Panc1 (cell line): ENCODE measurements at regions of chr7 and their contacts with region 1.

Region 1: DNA sequence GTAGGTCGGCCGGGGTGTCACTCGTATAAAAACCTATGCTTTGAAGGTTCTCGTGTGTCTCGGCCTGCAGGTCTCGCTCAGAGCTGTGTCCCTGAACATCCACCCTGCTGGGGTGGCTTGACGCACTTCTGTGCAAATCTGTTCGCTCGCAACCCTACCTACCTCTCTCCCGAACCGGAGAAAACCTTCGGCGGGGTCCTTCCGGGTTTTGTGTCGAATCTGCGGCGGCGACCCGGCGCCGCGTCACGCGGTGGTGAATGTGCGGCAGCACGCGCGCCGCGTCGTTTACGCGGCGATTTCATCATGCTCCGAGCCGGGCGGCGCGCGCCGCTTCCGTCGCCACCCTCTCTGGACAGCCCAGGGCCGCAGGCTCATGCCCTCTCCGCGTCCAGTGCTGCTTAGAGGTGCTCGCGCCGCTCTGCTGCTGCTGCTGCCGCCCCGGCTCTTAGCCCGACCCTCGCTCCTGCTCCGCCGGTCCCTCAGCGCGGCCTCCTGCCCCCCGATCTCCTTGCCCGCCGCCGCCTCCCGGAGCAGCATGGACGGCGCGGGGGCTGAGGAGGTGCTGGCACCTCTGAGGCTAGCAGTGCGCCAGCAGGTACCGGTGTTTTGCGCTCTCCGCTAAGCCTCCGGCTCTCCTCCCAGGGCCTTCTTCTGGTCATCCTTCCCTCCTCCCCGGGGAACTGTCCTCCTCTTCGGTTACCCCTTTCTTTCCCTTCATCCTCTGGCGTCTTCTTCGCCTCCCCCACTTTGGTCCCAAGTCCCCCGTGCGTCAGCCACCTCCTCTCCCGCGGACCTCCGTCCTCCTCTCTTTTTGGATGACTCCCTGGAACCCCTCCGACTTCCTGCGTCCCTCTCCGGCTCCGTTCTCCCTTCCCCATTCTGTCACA is at the start of gene GARS1:
- DNase-seq: peak; percentile 69
- ATAC-seq: peak; percentile 98
- H3K4me3 ChIP-seq: peak within 1 kb of the TSS; percentile 72 to 100
- H3K27ac ChIP-seq: peak within 1 kb of the TSS; percentile 99
- H3K4me1 ChIP-seq: peaks cover 19% of the 10 kb centered on the region
- H3K27me3 ChIP-seq: no peaks in the 10 kb centered on the region
- CTCF ChIP-seq: no peak
- total RNA-seq, gene GARS1: 271 TPM

Region 2: GRCh38 chr7:30225863-30226613 is 368.8 kb before region 1 on chr7:
- CTCF ChIA-PET with region 1: no interaction called
- POLR2A ChIA-PET with region 1: interaction called, 12 read pairs
- in situ Hi-C with region 1: no loop called
- intact Hi-C with region 1: no loop called
- DNase-seq: no peak
- ATAC-seq: peak; percentile 28; the same call in 1 of the 2 replicates
- H3K4me3 ChIP-seq: no peak overlapping the region
- H3K27ac ChIP-seq: no peak overlapping the region
- H3K4me1 ChIP-seq: 0 out of 2 replicates have a peak, but pooled peaks cover 3% of the 10 kb centered on the region
- H3K27me3 ChIP-seq: peaks cover 5% of the 10 kb centered on the region
- CTCF ChIP-seq: no peak

Region 3: DNA sequence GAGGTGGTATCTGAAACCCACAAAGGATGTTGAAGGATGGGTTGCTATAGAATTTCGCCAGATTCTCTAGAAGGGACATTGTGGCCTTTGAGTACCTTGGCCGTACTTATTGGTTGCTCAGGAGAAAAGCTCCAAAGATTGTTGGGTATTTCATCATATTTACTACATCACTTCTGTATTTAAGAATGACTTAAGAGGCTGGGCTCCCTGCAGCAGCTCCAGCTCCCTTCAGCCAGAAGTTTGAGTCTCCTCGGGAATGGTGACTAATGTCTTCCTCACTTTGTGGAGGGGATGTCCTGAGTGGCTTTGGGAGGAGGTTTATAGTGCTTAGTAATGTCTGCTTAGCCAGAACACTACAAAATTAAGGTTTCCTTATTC is 194.5 kb after region 1 on chr7:
- CTCF ChIA-PET with region 1: no interaction called
- POLR2A ChIA-PET with region 1: no interaction called
- in situ Hi-C with region 1: no loop called
- intact Hi-C with region 1: no loop called
- DNase-seq: no peak
- ATAC-seq: no peak; the same call in 1 of the 2 replicates
- H3K4me3 ChIP-seq: no peak overlapping the region
- H3K27ac ChIP-seq: no peak overlapping the region
- H3K4me1 ChIP-seq: no peaks in the 10 kb centered on the region
- H3K27me3 ChIP-seq: no peaks in the 10 kb centered on the region
- CTCF ChIP-seq: no peak

Region 4: DNA sequence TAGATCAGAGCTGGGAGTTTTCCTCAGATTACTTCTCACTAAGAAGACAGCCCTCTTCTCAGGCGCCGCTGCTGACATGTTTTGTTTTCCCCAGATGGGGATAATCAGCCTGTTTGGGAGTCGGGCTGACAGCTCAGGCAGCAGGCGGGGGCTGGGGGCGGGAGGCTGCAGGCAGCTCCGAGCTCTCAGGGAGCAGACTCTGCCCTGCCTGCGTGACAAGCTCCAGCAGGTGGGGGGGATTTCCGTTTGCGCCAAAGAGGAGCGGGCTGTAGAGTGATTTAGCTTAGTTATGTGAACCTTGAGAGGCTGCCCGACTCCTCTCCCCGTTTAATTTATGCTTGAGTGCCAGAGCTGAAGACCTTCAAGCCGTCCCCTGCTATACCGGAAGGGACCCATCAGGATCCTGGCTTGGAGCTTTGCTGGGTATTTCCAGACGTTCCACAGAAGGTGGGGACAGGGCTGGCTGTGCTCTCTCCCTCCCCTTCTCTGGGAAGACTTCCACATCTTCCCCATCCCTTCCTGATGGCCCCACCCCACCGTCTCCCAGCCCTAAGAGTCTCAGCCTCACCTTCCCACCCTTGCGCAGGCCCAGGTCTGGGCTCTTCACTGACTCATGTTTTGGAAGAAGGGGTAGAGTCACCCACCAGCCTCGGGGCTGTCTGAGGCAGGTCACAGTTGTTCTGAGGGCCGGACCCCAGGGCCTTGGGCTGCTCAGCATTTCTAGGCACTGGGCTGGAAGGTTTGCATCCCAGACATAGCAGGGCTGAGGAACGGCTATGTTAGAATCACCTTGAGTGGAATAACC is 432.6 kb after region 1 on chr7:
- CTCF ChIA-PET with region 1: no interaction called
- POLR2A ChIA-PET with region 1: no interaction called
- in situ Hi-C with region 1: no loop called
- intact Hi-C with region 1: no loop called
- DNase-seq: no peak
- ATAC-seq: no peak
- H3K4me3 ChIP-seq: no peak overlapping the region
- H3K27ac ChIP-seq: no peak overlapping the region
- H3K4me1 ChIP-seq: no peaks in the 10 kb centered on the region
- H3K27me3 ChIP-seq: no peaks in the 10 kb centered on the region
- CTCF ChIP-seq: no peak